H1 (cell line): ENCODE measurements at regions of chr22 and their contacts with region 1.

Region 1: GRCh38 chr22:29291215-29291614 is 15.2 kb upstream of the GAS2L1 start:
- DNase-seq: no peak
- H3K4me3 ChIP-seq: no peak overlapping the region
- H3K27ac ChIP-seq: no peak overlapping the region
- H3K4me1 ChIP-seq: no peaks in the 10 kb centered on the region
- H3K27me3 ChIP-seq: no peaks in the 10 kb centered on the region
- CTCF ChIP-seq: no peak
- EP300 ChIP-seq: no peak
- POLR2A ChIP-seq: no peak
- RAD21 ChIP-seq: no peak

Region 2: GRCh38 chr22:29253561-29254285 is 37.5 kb before region 1 on chr22:
- CTCF ChIA-PET with region 1: no interaction called
- POLR2A ChIA-PET with region 1: no interaction called
- DNase-seq: no peak
- H3K4me3 ChIP-seq: no peak overlapping the region
- H3K27ac ChIP-seq: no peak overlapping the region
- H3K4me1 ChIP-seq: peaks cover 0 to 6% (median 0%) of the 10 kb centered on the region in 4 experiments; a peak in 2 of 7 replicates
- H3K27me3 ChIP-seq: no peaks in the 10 kb centered on the region
- CTCF ChIP-seq: peak in 2 of 3 experiments; percentile 13 to 35; a peak in 2 of 4 replicates
- EP300 ChIP-seq: no peak
- POLR2A ChIP-seq: no peak
- RAD21 ChIP-seq: no peak

Region 3: GRCh38 chr22:29267858-29268417 is 23.3 kb before region 1 on chr22 and contains the starts of genes EWSR1 and RHBDD3:
- CTCF ChIA-PET with region 1: interaction called, 4 read pairs
- POLR2A ChIA-PET with region 1: interaction called, 436 read pairs
- DNase-seq: peak; percentile 69 to 100
- H3K4me3 ChIP-seq: peak within 1 kb of the TSS; percentile 80 to 96 (median 95)
- H3K27ac ChIP-seq: peak within 1 kb of the TSS; percentile 100
- H3K4me1 ChIP-seq: peaks cover 6 to 19% (median 11%) of the 10 kb centered on the region in 4 experiments; a peak in 6 of 7 replicates
- H3K27me3 ChIP-seq: no peaks in the 10 kb centered on the region
- CTCF ChIP-seq: no peak
- EP300 ChIP-seq: peak in 1 of 2 experiments; percentile 98; a peak in 2 of 3 replicates
- POLR2A ChIP-seq: peak; percentile 87 to 91; a peak in 2 of 3 replicates
- RAD21 ChIP-seq: no peak
- total RNA-seq, gene EWSR1: 385 and 387 TPM in 2 replicates
- total RNA-seq, gene RHBDD3: 72.1 and 75.7 TPM in 2 replicates

Region 4: GRCh38 chr22:29397791-29398190 is 106.6 kb after region 1 on chr22:
- CTCF ChIA-PET with region 1: no interaction called
- POLR2A ChIA-PET with region 1: no interaction called
- DNase-seq: no peak
- H3K4me3 ChIP-seq: no peak overlapping the region
- H3K27ac ChIP-seq: no peak overlapping the region
- H3K4me1 ChIP-seq: no peaks in the 10 kb centered on the region
- H3K27me3 ChIP-seq: no peaks in the 10 kb centered on the region
- CTCF ChIP-seq: no peak
- EP300 ChIP-seq: no peak
- POLR2A ChIP-seq: no peak
- RAD21 ChIP-seq: no peak